ENCODE measurements at regions of chr20 and their contacts with region 1.

Region 1: GRCh38 chr20:1313236-1313964 is 15.5 kb downstream of the SDCBP2 start:
- DNase-seq: peak; percentile 67 to 94 (median 84)

Region 2: GRCh38 chr20:1242530-1242929 is 70.9 kb before region 1 on chr20:
- intact Hi-C with region 1: no loop called
- DNase-seq: no peak

Region 3: GRCh38 chr20:1437235-1437904 is 124.0 kb after region 1 on chr20:
- intact Hi-C with region 1: loop called (anchors 5 kb)
- DNase-seq: peak; percentile 56 to 91 (median 80)

Region 4: DNA sequence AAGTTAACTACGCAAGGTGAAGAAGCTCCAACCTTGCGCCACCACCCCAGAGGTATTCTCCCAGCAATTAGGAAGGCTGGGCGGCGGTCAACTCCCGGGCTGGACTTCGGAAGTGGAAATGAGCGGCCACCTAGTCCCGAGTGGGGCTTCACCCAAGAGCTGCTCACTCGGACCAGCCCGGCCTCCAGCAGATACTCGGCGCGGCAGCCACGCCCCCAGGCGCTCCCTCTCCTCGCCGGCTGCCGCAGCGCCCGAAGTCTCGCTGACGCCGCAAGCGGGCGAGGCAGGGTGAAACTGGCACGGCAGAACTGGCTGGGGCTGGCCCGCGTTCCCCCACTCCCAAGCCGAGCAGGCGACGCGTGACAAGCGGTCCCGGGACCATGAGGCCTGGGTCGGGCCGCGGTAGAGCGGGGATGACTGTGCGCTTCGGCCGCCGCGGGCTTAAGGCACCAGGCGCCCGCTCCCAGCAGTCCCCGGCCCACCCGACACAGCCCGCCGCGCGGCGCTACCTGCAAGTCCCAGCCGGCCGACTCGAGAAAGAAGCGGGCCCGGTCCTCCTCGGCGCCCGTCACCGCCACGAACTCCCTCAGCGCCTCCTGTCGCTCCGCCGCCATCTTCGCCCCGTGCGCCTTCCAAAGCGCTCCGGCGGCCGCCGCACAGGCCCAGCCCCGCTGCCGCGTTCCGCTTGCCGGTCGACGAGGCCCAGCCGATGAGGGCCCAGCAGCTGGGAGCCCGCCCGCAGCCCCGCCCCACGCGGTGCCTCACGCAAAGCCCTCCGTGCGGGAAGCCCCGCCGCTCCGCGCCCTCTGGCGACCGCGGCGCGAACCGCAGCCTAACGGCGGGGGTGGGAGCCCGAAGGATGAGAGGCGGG is 153.0 kb after region 1 on chr20 and contains the start of gene NSFL1C:
- intact Hi-C with region 1: loop called (anchors 10 kb)
- DNase-seq: peak; percentile 83 to 99 (median 96)

Measured in head of caudate nucleus (tissue), 42 donors.